Posterior vena cava (tissue), 2 donors: ENCODE measurements at regions of chr2 and their contacts with region 1.

Region 1: GRCh38 chr2:111116843-111117597 is 3.7 kb upstream of the BCL2L11 start:
- DNase-seq: peak; percentile 91

Region 2: GRCh38 chr2:111715987-111716904 is 599.2 kb after region 1 on chr2:
- intact Hi-C with region 1: loop called in 1 of 2 experiments (anchors 10 kb)
- DNase-seq: no peak